Activated CD8-positive, alpha-beta T cell treated with anti-CD3 and anti-CD28 coated beads, Interleukin-2, amount 10 ng/mL, durations not matched to agents 7 days and 5 days (primary cell): ENCODE measurements at regions of chr11 and their contacts with region 1.

Region 1: DNA sequence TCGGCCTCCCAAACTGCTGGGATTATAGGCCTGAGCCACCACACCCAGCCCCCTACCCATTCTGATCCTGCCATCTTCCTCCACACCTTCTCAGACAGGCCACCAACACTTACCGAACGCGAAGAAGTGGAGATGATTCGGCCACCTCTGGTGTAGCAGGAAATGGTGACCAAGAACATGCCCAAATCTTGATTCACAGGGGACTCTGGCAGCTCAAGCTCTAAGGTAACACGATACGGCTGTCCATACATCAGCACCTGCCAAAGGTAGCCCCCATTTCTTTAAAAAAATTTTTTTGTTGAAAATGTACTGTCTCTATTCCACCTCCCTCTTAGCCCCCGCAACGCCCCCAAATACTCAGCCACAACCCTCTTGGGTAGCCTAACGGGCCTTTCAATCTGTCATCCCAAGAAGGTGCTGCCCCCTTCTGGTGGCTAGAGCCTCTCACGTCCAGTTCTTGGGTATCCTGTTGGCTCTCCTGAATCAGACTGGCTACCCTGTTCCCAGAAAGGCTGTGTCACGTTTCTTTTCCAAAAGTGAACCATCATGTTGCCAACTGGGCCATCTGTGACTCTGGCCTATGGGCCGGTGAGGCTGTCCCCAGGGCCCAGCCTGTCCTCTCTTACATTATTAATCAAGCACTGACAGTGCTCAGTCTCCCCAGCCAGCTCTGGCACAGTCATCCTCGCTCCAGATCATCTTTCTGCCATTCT is 5.3 kb upstream of the LRRN4CL start:
- DNase-seq: peak; percentile 86
- ATAC-seq: peak; percentile 92
- H3K4me3 Mint-ChIP-seq: no peak overlapping the region
- H3K27ac Mint-ChIP-seq: peak overlapping the region; percentile 36
- H3K4me1 Mint-ChIP-seq: peaks cover 9% of the 10 kb centered on the region
- H3K27me3 Mint-ChIP-seq: no peaks in the 10 kb centered on the region

Region 2: GRCh38 chr11:62411524-62411923 is 283.1 kb before region 1 on chr11:
- CTCF ChIA-PET with region 1: no interaction called
- POLR2A ChIA-PET with region 1: no interaction called
- DNase-seq: no peak
- ATAC-seq: no peak
- H3K4me3 Mint-ChIP-seq: no peak overlapping the region
- H3K27ac Mint-ChIP-seq: no peak overlapping the region
- H3K4me1 Mint-ChIP-seq: no peaks in the 10 kb centered on the region
- H3K27me3 Mint-ChIP-seq: peaks cover 2% of the 10 kb centered on the region

Region 3: GRCh38 chr11:62652161-62653006 is 42.2 kb before region 1 on chr11:
- CTCF ChIA-PET with region 1: interaction called, 11 read pairs
- POLR2A ChIA-PET with region 1: no interaction called
- DNase-seq: no peak
- ATAC-seq: peak; percentile 7
- H3K4me3 Mint-ChIP-seq: peak overlapping the region; percentile 87
- H3K27ac Mint-ChIP-seq: peak overlapping the region; percentile 91
- H3K4me1 Mint-ChIP-seq: peaks cover 26% of the 10 kb centered on the region
- H3K27me3 Mint-ChIP-seq: no peaks in the 10 kb centered on the region

Region 4: DNA sequence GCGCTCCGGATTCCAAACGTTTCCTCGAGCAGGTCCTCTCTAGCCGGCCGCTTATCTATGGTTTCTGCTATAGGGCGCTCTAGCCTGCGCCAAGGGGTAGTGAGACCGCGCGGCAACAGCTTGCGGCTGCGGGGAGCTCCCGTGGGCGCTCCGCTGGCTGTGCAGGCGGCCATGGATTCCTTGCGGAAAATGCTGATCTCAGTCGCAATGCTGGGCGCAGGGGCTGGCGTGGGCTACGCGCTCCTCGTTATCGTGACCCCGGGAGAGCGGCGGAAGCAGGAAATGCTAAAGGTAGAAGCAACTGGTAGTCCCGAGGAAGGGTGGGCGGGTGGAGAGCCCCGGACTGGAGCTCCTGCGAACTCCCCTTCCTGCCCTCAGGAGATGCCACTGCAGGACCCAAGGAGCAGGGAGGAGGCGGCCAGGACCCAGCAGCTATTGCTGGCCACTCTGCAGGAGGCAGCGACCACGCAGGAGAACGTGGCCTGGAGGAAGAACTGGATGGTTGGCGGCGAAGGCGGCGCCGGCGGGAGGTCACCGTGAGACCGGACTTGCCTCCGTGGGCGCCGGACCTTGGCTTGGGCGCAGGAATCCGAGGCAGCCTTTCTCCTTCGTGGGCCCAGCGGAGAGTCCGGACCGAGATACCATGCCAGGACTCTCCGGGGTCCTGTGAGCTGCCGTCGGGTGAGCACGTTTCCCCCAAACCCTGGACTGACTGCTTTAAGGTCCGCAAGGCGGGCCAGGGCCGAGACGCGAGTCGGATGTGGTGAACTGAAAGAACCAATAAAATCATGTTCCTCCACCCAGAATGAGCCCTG is 22.8 kb before region 1 on chr11 and contains the starts of genes LBHD1 and UQCC3:
- CTCF ChIA-PET with region 1: interaction called, 77 read pairs
- POLR2A ChIA-PET with region 1: interaction called, 6 read pairs
- DNase-seq: peak; percentile 81
- ATAC-seq: peak; percentile 85
- H3K4me3 Mint-ChIP-seq: peak within 1 kb of the TSS; percentile 99
- H3K27ac Mint-ChIP-seq: peak within 1 kb of the TSS; percentile 99
- H3K4me1 Mint-ChIP-seq: peaks cover 67% of the 10 kb centered on the region
- H3K27me3 Mint-ChIP-seq: no peaks in the 10 kb centered on the region
- total RNA-seq, gene LBHD1: 22.3 to 25.0 TPM
- total RNA-seq, gene UQCC3: 7.5 TPM

Region 5: DNA sequence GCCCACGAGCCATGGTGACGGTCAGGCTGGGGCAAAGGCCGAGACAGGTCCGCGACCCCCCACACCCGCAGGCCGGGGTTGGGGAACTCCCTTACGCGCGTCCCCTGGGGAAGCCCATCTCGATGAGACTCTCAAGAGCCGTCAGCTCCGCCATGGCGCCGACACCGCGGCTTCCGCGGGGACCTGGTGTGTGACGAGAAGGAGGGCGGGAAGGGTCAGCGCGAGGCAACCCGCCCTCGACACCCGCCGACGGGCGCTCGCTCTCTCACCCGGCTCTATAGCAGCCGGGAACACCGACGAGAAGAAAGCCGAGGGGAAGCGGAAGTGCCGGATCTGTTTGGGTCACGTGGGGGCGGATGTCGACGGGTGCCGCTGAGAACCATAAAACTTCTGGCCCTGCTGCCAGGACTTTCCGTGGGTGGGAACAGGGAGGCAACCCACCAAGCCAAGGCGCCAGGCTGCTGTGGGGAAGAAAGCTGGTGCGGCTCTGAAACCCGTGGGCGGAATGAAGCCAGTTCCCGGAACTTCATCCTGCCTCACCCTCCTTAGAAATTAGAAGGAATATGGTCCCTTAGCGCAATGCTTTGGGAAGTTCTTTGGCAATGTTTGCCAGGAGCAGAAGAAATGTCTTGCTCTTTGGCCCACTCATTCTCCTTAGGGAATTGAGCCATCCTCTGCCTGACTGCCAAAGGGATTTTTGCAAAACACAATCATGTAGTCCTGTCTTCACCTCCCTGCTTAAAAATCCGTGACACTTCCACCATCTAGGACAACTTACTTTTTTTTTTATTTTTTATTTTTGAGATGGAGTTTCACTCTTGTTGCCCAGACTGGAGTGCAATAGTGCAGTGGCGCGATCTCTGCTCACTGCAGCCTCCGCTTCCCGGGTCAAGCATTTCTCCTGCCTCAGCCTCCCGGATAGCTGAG is 15.6 kb before region 1 on chr11 and contains the start of gene UBXN1:
- CTCF ChIA-PET with region 1: interaction called, 77 read pairs
- POLR2A ChIA-PET with region 1: interaction called, 6 read pairs
- DNase-seq: peak; percentile 89
- ATAC-seq: peak; percentile 88
- H3K4me3 Mint-ChIP-seq: peak within 1 kb of the TSS; percentile 92
- H3K27ac Mint-ChIP-seq: peak within 1 kb of the TSS; percentile 87
- H3K4me1 Mint-ChIP-seq: peaks cover 42% of the 10 kb centered on the region
- H3K27me3 Mint-ChIP-seq: no peaks in the 10 kb centered on the region
- total RNA-seq, gene UBXN1: 107 to 118 TPM

Region 6: GRCh38 chr11:62705880-62706849 is 11.6 kb after region 1 on chr11:
- CTCF ChIA-PET with region 1: interaction called, 19 read pairs
- POLR2A ChIA-PET with region 1: interaction called, 5 read pairs
- DNase-seq: peak; percentile 95
- ATAC-seq: peak; percentile 67
- H3K4me3 Mint-ChIP-seq: peak overlapping the region; percentile 90
- H3K27ac Mint-ChIP-seq: peak overlapping the region; percentile 83
- H3K4me1 Mint-ChIP-seq: peaks cover 49% of the 10 kb centered on the region
- H3K27me3 Mint-ChIP-seq: no peaks in the 10 kb centered on the region

Region 7: GRCh38 chr11:63352144-63352543 is 657.5 kb after region 1 on chr11:
- CTCF ChIA-PET with region 1: no interaction called
- POLR2A ChIA-PET with region 1: no interaction called
- DNase-seq: no peak
- ATAC-seq: no peak
- H3K4me3 Mint-ChIP-seq: no peak overlapping the region
- H3K27ac Mint-ChIP-seq: no peak overlapping the region
- H3K4me1 Mint-ChIP-seq: no peaks in the 10 kb centered on the region
- H3K27me3 Mint-ChIP-seq: peaks cover 3% of the 10 kb centered on the region